Psoas muscle (tissue), 8 donors: ENCODE measurements at regions of chr3 and their contacts with region 1.

Region 1: GRCh38 chr3:132730891-132731580 is 8.8 kb upstream of the NPHP3 start:
- DNase-seq: no peak
- ATAC-seq: peak; percentile 69 to 91 (median 74)
- H3K4me3 ChIP-seq: no peak overlapping the region
- H3K27ac ChIP-seq: no peak overlapping the region
- H3K4me1 ChIP-seq: no peaks in the 10 kb centered on the region
- H3K27me3 ChIP-seq: no peaks in the 10 kb centered on the region
- CTCF ChIP-seq: peak; percentile 53

Region 2: DNA sequence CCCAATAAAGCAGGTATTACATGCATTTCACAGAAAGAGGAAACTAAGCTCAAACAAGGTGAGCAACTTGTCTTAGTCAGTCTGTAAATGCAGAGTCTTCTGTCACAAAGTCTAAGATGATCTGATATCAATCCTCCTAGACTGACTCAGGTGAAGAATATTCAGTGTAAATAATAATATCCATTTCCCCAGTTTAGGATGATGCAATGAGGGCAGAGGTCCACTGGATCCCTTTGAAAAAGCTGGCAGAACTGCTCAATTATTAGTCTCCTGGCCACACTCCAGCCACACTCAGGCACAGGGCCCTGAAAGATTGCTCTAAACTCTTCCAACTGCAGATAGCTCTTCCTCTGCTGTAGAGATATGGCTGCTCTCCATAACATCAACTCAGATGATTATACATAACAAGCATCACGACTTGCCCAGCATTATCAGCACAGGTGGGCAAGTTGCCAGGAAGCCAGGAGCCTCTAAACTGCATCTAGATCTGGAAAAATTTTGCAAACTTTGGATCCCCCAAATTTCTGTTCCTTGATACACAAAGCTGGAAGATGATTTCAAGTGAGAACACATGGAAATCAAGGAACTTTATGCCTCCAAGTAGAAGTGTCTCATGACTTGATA is 566.5 kb before region 1 on chr3:
- intact Hi-C with region 1: no loop called
- DNase-seq: no peak
- ATAC-seq: no peak
- H3K4me3 ChIP-seq: no peak overlapping the region
- H3K27ac ChIP-seq: no peak overlapping the region
- H3K4me1 ChIP-seq: no peaks in the 10 kb centered on the region
- H3K27me3 ChIP-seq: peaks cover 0 to 2% (median 0%) of the 10 kb centered on the region in 3 donors
- CTCF ChIP-seq: no peak

Region 3: DNA sequence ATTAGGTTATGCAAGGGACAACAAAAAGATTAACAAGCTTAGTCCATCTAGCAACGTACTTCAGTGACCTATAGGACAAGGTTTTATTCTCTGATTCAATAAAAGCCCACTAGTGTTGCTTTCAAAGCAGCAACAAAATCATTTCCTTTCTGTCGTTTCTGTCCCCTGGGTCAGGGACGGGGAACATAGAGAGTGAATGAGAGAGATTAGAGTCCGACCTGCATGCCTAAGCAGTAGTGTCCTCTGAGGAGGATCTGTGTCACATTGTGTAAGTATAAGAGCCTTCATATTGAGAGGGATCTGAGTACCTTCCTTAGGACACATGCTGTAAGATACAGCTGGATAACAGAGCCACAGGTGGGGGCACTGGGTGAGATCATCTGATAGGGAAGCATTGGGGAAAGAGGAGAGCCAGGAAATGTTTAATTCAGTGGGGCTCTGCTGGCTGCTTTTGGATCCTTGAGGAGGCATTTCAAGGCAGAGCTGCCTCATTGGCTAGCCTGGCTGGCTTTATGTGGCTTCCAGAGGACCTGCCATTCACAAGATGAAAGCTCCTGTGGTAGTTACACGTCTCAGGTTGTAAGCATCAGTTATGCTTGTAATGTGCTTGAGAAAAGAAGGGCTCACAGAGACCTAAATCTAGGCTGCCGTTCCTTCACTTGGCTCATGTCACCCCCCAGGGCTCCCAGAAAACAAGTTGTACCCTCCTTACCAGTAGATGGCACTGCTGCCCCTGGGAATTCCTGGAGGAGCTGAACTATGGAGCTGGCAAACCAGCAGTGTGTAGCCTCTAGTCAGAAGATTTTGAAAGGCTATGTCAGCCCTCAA is 309.9 kb after region 1 on chr3:
- intact Hi-C with region 1: loop called in 1 of 2 experiments (anchors 2 kb)
- DNase-seq: peak; percentile 67 to 81
- ATAC-seq: peak; percentile 74 to 83 (median 80)
- H3K4me3 ChIP-seq: peak overlapping the region; percentile 19
- H3K27ac ChIP-seq: peak overlapping the region; percentile 44
- H3K4me1 ChIP-seq: peaks cover 9% of the 10 kb centered on the region
- H3K27me3 ChIP-seq: no peaks in the 10 kb centered on the region
- CTCF ChIP-seq: peak; percentile 76

Region 4: GRCh38 chr3:133083395-133083794 is 352.4 kb after region 1 on chr3:
- intact Hi-C with region 1: no loop called
- DNase-seq: no peak
- ATAC-seq: no peak
- H3K4me3 ChIP-seq: no peak overlapping the region
- H3K27ac ChIP-seq: no peak overlapping the region
- H3K4me1 ChIP-seq: peaks cover 6% of the 10 kb centered on the region
- H3K27me3 ChIP-seq: no peaks in the 10 kb centered on the region
- CTCF ChIP-seq: no peak

Region 5: DNA sequence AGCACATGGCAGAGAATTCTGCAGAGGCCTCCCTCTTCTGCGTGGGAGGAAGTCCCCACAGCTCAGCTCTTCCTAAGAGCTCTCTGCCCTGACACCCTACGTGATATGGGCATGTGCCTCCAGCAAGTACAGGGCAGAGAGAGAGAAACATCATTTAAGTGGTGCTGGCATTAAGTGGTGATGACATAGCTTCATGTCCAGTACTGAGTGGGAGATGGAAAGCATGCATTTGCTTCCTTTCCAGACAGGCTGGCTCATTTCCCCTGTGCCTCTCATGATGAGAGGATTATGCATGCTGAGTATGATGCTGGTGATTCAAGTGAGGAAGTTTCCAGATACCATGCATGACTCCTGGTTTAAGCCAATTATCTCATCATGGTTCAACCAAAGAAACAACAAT is 695.7 kb after region 1 on chr3:
- intact Hi-C with region 1: loop called (anchors 2 kb)
- DNase-seq: no peak
- ATAC-seq: no peak
- H3K4me3 ChIP-seq: no peak overlapping the region
- H3K27ac ChIP-seq: no peak overlapping the region
- H3K4me1 ChIP-seq: no peaks in the 10 kb centered on the region
- H3K27me3 ChIP-seq: no peaks in the 10 kb centered on the region
- CTCF ChIP-seq: no peak